ENCODE measurements at regions of chr20 and their contacts with region 1.

Region 1: GRCh38 chr20:17431621-17432364 is 99.4 kb downstream of the BFSP1 start:
- DNase-seq: no peak
- H3K4me3 ChIP-seq: no peak overlapping the region
- H3K27ac ChIP-seq: no peak overlapping the region
- H3K4me1 ChIP-seq: peaks cover 5 to 22% (median 6%) of the 10 kb centered on the region in 3 donors
- H3K27me3 ChIP-seq: peaks cover 0 to 27% (median 0%) of the 10 kb centered on the region in 4 donors
- CTCF ChIP-seq: peak; percentile 71 to 91 (median 81)
- POLR2A ChIP-seq: no peak

Region 2: GRCh38 chr20:16801919-16802911 is 629.6 kb before region 1 on chr20:
- intact Hi-C with region 1: loop called (anchors 5 kb)
- DNase-seq: no peak
- H3K4me3 ChIP-seq: no peak overlapping the region
- H3K27ac ChIP-seq: no peak overlapping the region
- H3K4me1 ChIP-seq: no peaks in the 10 kb centered on the region
- H3K27me3 ChIP-seq: peaks cover 0 to 53% (median 0%) of the 10 kb centered on the region in 4 donors
- CTCF ChIP-seq: peak; percentile 39 to 80 (median 70)
- POLR2A ChIP-seq: no peak

Region 3: DNA sequence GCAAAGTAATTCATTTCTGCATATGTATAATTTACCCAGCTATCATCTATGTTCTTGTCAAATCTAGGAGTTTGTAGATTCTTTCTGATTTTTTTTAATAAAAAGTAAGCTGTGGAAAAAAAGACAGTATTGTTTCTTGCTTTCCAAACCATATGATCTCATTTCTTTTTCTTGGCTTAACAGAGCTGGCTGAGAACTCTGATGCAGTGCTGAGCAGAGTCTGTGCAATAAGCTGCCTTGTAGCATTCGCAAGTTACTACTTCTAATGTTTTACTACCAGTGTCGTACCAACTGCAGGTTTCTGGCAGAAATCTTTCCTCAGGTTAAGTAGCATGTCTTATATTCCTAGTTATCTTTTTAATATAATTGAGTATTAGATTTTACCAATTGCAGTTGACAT is 234.7 kb after region 1 on chr20:
- intact Hi-C with region 1: no loop called
- DNase-seq: no peak
- H3K4me3 ChIP-seq: no peak overlapping the region
- H3K27ac ChIP-seq: no peak overlapping the region
- H3K4me1 ChIP-seq: peaks cover 0 to 50% (median 6%) of the 10 kb centered on the region in 3 donors
- H3K27me3 ChIP-seq: no peaks in the 10 kb centered on the region
- CTCF ChIP-seq: no peak
- POLR2A ChIP-seq: no peak

Measured in esophagus squamous epithelium (tissue), 5 donors.